ENCODE measurements at regions of chrX and their contacts with region 1.

Region 1: GRCh38 chrX:11100281-11101035 is 10.7 kb upstream of the HCCS start:
- DNase-seq: peak in 3 of 4 experiments; percentile 12 to 37 (median 28)
- ATAC-seq: peak; percentile 76
- H3K4me3 ChIP-seq: no peak overlapping the region
- H3K27ac ChIP-seq: no peak overlapping the region
- H3K4me1 ChIP-seq: peaks cover 0 to 2% of the 10 kb centered on the region in 2 experiments; a peak in 1 of 5 replicates
- H3K27me3 ChIP-seq: no peaks in the 10 kb centered on the region
- CTCF ChIP-seq: peak; percentile 47 to 60 (median 48); a peak in 5 of 6 replicates
- EP300 ChIP-seq: no peak
- POLR2A ChIP-seq: no peak
- RAD21 ChIP-seq: peak; percentile 34 to 63; a peak in 3 of 4 replicates

Region 2: GRCh38 chrX:10615931-10616775 is 484.3 kb before region 1 on chrX:
- CTCF ChIA-PET with region 1: no interaction called
- POLR2A ChIA-PET with region 1: no interaction called
- in situ Hi-C with region 1: no loop called
- intact Hi-C with region 1: loop called (anchors 10 kb)
- DNase-seq: peak; percentile 25 to 50 (median 44)
- ATAC-seq: peak; percentile 81
- H3K4me3 ChIP-seq: no peak overlapping the region
- H3K27ac ChIP-seq: no peak overlapping the region
- H3K4me1 ChIP-seq: peaks cover 0 to 5% of the 10 kb centered on the region in 2 experiments; a peak in 2 of 5 replicates
- H3K27me3 ChIP-seq: peaks cover 4 to 12% of the 10 kb centered on the region in 2 experiments
- CTCF ChIP-seq: peak; percentile 48 to 70 (median 62)
- EP300 ChIP-seq: no peak
- POLR2A ChIP-seq: no peak
- RAD21 ChIP-seq: peak in 1 of 2 experiments; percentile 53; a peak in 2 of 4 replicates

Region 3: GRCh38 chrX:10739426-10739825 is 361.0 kb before region 1 on chrX:
- CTCF ChIA-PET with region 1: no interaction called
- POLR2A ChIA-PET with region 1: no interaction called
- in situ Hi-C with region 1: no loop called
- intact Hi-C with region 1: loop called (anchors 5 kb)
- DNase-seq: no peak
- ATAC-seq: no peak
- H3K4me3 ChIP-seq: no peak overlapping the region
- H3K27ac ChIP-seq: no peak overlapping the region
- H3K4me1 ChIP-seq: no peaks in the 10 kb centered on the region
- H3K27me3 ChIP-seq: no peaks in the 10 kb centered on the region
- CTCF ChIP-seq: no peak
- EP300 ChIP-seq: no peak
- POLR2A ChIP-seq: no peak
- RAD21 ChIP-seq: no peak